PC-9 (cell line): ENCODE measurements at regions of chr3 and their contacts with region 1.

Region 1: DNA sequence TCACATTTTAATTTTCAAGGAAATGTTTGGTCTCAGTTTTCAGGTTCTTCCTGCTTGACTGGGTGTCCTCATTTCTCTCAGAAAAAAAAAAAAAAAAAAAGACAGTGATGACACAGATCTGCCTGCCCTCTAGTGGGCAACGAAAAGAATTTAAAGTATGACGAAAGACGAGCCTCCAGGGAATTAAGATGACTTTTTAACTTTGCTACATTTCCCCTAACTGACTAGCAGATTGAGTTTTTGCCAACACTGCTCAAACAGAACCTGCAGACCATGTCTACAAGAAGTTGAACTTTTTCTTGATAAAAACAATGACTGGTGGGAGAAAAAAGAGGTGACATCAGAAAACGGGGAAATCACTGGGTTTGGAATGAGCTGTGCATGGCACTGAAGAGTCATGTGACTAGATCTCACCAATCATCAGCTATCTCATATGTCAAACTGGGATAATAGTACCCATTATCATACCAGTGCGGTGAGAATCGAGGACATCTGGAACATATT is 40.8 kb downstream of the EOMES start:
- DNase-seq: peak in 1 of 2 experiments; percentile 83
- H3K4me3 ChIP-seq: 0 out of 2 replicates have a peak overlapping the region, but pooled peaks have one; percentile 4
- H3K27ac ChIP-seq: peak overlapping the region; percentile 76
- H3K4me1 ChIP-seq: peaks cover 34% of the 10 kb centered on the region
- H3K27me3 ChIP-seq: no peaks in the 10 kb centered on the region
- CTCF ChIP-seq: peak; percentile 81

Region 2: DNA sequence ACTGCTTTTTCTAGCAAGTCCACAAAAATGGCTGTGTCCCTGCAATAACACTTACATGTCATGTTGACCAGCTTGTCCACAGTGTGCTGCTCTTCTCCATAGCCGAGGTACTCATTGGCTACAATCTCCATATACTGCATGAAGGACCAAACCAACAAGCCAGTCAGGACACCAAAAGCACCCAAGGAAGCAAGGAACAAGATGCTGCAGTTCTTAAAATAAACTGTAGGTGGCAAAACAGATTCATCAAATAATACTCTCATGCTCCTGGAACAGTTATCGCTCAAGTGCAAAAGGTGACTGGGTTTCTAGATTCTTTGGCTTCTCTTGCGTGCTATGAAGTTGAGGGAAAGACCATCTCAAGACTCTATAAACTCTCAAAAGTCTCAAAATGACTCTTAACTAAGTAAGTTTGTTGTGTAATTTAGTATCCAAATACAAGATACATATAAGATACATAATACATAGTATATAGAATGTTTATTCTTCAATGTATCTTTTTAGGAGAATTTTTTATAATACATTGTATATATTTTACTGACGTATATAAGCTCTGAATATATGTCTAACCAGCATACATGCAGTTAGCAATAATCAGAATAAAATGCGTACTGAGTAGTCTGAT is 369.1 kb before region 1 on chr3:
- CTCF ChIA-PET with region 1: no interaction called
- POLR2A ChIA-PET with region 1: no interaction called
- intact Hi-C with region 1: loop called (anchors 5 kb)
- DNase-seq: peak; percentile 12 to 34
- H3K4me3 ChIP-seq: no peak overlapping the region
- H3K27ac ChIP-seq: no peak overlapping the region
- H3K4me1 ChIP-seq: peaks cover 16% of the 10 kb centered on the region
- H3K27me3 ChIP-seq: no peaks in the 10 kb centered on the region
- CTCF ChIP-seq: peak; percentile 83

Region 3: DNA sequence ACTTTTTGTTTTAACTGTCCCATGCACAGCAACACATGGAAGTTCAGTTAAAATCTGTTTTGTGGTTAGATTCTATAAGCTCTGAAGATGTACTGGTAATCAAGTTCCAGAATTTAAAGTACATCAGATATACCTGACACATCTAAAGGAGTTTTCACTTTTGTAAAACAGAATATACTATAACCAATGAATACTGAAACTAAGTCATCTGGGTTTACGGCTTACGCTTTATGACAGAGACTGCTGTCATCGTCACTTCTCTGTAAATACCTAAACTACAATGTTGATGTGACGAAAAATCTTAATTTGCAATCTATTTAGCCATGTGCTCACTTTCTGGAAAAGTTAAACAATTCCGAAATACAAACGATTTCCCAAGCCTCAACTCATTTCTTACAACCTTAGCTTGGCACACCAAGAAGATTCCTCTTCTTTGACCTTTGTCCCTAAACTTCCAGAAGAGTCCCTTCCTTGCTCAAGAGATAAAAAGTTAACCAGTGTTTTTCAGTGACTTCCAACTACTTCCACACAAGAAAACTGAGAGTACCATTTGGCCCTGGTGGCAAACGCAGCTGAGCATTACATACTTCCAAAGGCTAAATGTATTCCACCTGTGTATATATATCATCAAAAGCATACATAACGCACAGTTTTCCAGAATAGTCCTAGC is 255.3 kb before region 1 on chr3:
- CTCF ChIA-PET with region 1: interaction called, 11 read pairs
- POLR2A ChIA-PET with region 1: no interaction called
- intact Hi-C with region 1: loop called (anchors 1 kb)
- DNase-seq: no peak
- H3K4me3 ChIP-seq: no peak overlapping the region
- H3K27ac ChIP-seq: no peak overlapping the region
- H3K4me1 ChIP-seq: no peaks in the 10 kb centered on the region
- H3K27me3 ChIP-seq: no peaks in the 10 kb centered on the region
- CTCF ChIP-seq: no peak

Region 4: GRCh38 chr3:27467545-27467944 is 213.8 kb before region 1 on chr3:
- CTCF ChIA-PET with region 1: no interaction called
- POLR2A ChIA-PET with region 1: no interaction called
- intact Hi-C with region 1: loop called (anchors 5 kb)
- DNase-seq: no peak
- H3K4me3 ChIP-seq: no peak overlapping the region
- H3K27ac ChIP-seq: no peak overlapping the region
- H3K4me1 ChIP-seq: no peaks in the 10 kb centered on the region
- H3K27me3 ChIP-seq: no peaks in the 10 kb centered on the region
- CTCF ChIP-seq: peak; percentile 63

Region 5: GRCh38 chr3:27533718-27534573 is 147.4 kb before region 1 on chr3:
- CTCF ChIA-PET with region 1: interaction called, 9 read pairs
- POLR2A ChIA-PET with region 1: no interaction called
- intact Hi-C with region 1: loop called (anchors 2 kb)
- DNase-seq: peak; percentile 87 to 97
- H3K4me3 ChIP-seq: peak overlapping the region; percentile 9; the same call in 1 of the 2 replicates
- H3K27ac ChIP-seq: peak overlapping the region; percentile 95
- H3K4me1 ChIP-seq: peaks cover 54% of the 10 kb centered on the region
- H3K27me3 ChIP-seq: no peaks in the 10 kb centered on the region
- CTCF ChIP-seq: peak; percentile 58; the same call in 1 of the 2 replicates